Activated CD4-positive, alpha-beta T cell treated with anti-CD3 and anti-CD28 coated beads, Interleukin-2, amount 10 ng/mL, durations not matched to agents 24 days and 14 days (primary cell): ENCODE measurements at regions of chrX and their contacts with region 1.

Region 1: DNA sequence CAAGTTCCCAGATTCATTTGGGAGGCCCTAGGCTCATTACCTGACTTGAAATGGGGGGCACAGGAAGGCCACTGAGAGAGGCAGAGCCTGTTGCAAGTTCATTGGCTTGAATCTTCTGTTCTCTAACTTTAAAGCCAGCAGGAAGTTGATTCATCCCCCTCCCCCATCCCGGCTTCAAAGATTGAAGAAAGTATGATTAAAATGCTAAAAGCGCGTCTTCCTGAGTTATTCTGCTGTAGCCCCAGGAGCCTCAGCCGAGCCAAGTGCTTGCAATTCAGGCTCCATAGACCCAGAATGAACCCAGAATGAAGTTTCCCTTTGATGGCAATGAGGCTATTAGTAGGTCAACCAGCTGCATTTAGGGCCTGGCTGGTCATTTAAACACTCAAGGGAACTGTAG is 14.7 kb downstream of the CHST7 start:
- DNase-seq: peak; percentile 83
- H3K4me3 Mint-ChIP-seq: peak overlapping the region; percentile 76
- H3K27ac Mint-ChIP-seq: peak overlapping the region; percentile 89
- H3K4me1 Mint-ChIP-seq: peaks cover 25% of the 10 kb centered on the region
- H3K27me3 Mint-ChIP-seq: no peaks in the 10 kb centered on the region

Region 2: GRCh38 chrX:46545111-46546005 is 42.9 kb before region 1 on chrX and contains the start of gene ZNF674:
- intact Hi-C with region 1: loop called (anchors 1 kb)
- DNase-seq: peak; percentile 98
- H3K4me3 Mint-ChIP-seq: peak within 1 kb of the TSS; percentile 95
- H3K27ac Mint-ChIP-seq: peak within 1 kb of the TSS; percentile 97
- H3K4me1 Mint-ChIP-seq: peaks cover 16% of the 10 kb centered on the region
- H3K27me3 Mint-ChIP-seq: no peaks in the 10 kb centered on the region
- total RNA-seq, gene ZNF674: 2.1 and 2.6 TPM in 2 replicates

Region 3: DNA sequence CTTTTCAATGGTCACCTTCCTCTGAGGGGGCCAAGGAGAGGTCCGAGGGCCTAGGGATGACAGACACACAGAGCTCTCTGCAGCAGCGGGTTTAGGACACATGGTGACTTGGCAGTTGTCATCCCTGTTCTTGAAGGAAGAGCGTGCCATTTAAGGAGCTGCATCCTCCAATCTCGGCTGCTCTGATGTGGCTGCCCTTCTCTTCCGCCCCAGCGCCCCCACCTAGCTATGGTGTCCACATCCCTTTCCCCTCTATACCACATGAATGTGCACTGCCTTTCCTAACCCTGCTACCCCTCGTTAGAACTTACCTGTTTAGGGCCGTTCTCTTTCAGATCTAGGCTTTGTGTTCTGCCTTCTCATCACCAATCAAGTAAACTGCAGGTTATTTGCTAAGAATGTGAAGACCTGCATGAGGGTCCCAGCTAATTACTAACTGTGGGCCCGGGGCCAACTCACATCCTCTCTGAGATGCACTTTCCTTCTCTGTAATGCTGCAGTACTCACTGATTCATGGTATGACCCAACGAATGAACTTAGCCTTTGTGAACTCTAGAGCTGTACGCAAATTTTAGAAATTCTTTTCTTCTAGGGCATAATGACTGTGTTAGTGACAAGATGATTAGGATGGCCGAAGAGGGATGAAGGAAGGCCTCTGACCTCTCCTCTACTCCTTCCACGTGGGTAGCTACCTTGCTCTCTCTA is 23.5 kb after region 1 on chrX:
- intact Hi-C with region 1: loop called (anchors 2 kb)
- DNase-seq: peak; percentile 85
- H3K4me3 Mint-ChIP-seq: peak overlapping the region; percentile 64
- H3K27ac Mint-ChIP-seq: peak overlapping the region; percentile 73
- H3K4me1 Mint-ChIP-seq: peaks cover 39% of the 10 kb centered on the region
- H3K27me3 Mint-ChIP-seq: no peaks in the 10 kb centered on the region

Region 4: GRCh38 chrX:46628460-46629371 is 40.5 kb after region 1 on chrX:
- intact Hi-C with region 1: loop called (anchors 2 kb)
- DNase-seq: peak; percentile 68
- H3K4me3 Mint-ChIP-seq: peak overlapping the region; percentile 67
- H3K27ac Mint-ChIP-seq: peak overlapping the region; percentile 94
- H3K4me1 Mint-ChIP-seq: peaks cover 20% of the 10 kb centered on the region
- H3K27me3 Mint-ChIP-seq: no peaks in the 10 kb centered on the region

Region 5: DNA sequence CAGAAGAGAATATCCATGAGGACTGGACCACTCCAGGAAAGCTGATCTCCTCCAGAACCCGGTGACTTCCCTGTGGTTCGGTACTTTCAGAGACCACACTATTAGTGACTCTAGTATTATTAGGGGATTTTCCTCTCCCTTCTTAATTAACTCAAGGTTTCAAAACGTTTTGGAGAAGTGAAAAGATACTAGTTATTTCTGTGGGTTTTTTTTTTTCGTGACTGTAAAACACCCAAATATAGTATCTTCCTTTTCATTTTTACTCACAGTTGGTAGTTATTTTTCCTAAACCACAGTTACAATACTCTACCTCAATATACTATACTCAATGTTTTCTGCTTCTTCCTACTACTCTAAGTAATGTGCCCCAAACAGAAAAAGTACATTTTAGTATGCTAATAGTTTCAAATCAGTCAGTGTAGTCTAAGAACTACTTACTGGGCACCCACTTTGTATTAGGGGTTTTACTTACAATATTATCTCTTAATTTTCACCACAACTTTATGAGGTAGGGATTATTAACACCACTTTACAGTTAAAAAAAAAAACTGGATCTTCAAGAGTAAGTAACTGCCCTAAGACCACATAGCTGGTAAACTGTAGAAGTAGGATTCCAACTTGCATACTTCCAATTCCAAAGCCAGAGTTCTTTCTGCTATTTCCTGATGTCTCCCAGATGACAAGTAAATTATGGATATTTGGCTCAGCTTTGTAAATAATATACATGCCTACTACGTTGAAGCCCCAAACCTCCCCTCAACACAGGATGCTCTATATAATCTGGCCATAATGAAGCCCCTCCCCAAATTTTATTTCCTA is 125.6 kb after region 1 on chrX:
- intact Hi-C with region 1: loop called (anchors 5 kb)
- DNase-seq: no peak
- H3K4me3 Mint-ChIP-seq: peak overlapping the region; percentile 33
- H3K27ac Mint-ChIP-seq: peak overlapping the region; percentile 78
- H3K4me1 Mint-ChIP-seq: peaks cover 57% of the 10 kb centered on the region
- H3K27me3 Mint-ChIP-seq: no peaks in the 10 kb centered on the region

Region 6: DNA sequence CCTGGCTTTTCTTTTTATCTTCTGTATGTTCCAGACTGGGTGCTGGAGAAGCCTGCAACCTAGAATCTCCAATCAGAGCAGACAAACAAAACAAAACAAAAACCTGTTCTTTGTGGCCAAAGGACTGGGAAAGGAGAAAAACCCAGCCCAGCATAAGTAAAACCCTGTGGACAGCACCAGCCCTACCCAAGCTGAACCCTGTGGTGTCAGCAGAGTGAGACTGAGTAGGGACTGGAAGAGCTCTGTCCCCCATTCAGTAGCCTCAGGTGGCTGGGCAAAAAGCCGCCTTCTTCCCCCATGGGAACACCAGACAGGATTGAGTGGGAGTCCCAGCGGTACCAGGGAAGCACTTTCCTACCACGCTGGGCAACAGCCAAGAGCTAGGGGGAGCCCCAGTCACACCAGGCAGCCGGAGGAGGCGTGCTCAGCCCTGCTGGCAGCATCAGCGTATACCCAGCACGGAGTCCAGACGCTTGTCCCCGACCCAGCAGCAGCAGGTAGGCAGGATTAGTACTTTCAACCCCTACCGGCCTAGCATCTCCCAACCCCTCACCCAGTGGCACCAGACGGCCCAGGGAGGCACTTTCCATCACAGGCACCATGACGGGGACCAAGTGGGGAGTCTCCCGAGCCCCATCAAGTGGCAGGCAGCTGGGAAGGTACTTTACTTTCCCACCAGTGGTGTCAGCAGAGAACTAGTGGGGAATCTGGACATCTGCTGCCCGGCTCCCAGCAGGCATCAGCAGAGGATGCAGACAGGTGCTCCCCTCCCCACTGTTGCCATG is 315.4 kb after region 1 on chrX:
- intact Hi-C with region 1: no loop called
- DNase-seq: peak; percentile 82
- H3K4me3 Mint-ChIP-seq: peak overlapping the region; percentile 69
- H3K27ac Mint-ChIP-seq: no peak overlapping the region
- H3K4me1 Mint-ChIP-seq: no peaks in the 10 kb centered on the region
- H3K27me3 Mint-ChIP-seq: peaks cover 22% of the 10 kb centered on the region

Region 7: GRCh38 chrX:47059142-47059874 is 471.0 kb after region 1 on chrX:
- intact Hi-C with region 1: no loop called
- DNase-seq: no peak
- H3K4me3 Mint-ChIP-seq: no peak overlapping the region
- H3K27ac Mint-ChIP-seq: no peak overlapping the region
- H3K4me1 Mint-ChIP-seq: no peaks in the 10 kb centered on the region
- H3K27me3 Mint-ChIP-seq: no peaks in the 10 kb centered on the region